MCF 10A (cell line): ENCODE measurements at regions of chr3 and their contacts with region 1.

Region 1: GRCh38 chr3:52123106-52123725 is 31.0 kb downstream of the POC1A start:
- DNase-seq: peak; percentile 75
- H3K4me3 Mint-ChIP-seq: no peak overlapping the region
- H3K27ac Mint-ChIP-seq: peak overlapping the region; percentile 49
- H3K4me1 Mint-ChIP-seq: peaks cover 18% of the 10 kb centered on the region
- H3K27me3 Mint-ChIP-seq: no peaks in the 10 kb centered on the region
- CTCF ChIP-seq: peak; percentile 94

Region 2: GRCh38 chr3:52108302-52109232 is 14.6 kb before region 1 on chr3:
- CTCF ChIA-PET with region 1: interaction called, 14 read pairs
- POLR2A ChIA-PET with region 1: interaction called, 3 read pairs
- intact Hi-C with region 1: no loop called
- DNase-seq: no peak
- H3K4me3 Mint-ChIP-seq: no peak overlapping the region
- H3K27ac Mint-ChIP-seq: peak overlapping the region; percentile 39
- H3K4me1 Mint-ChIP-seq: peaks cover 7% of the 10 kb centered on the region
- H3K27me3 Mint-ChIP-seq: no peaks in the 10 kb centered on the region
- CTCF ChIP-seq: no peak

Region 3: GRCh38 chr3:52144034-52144795 is 21.0 kb after region 1 on chr3:
- CTCF ChIA-PET with region 1: interaction called, 15 read pairs
- POLR2A ChIA-PET with region 1: no interaction called
- intact Hi-C with region 1: loop called (anchors 1 kb)
- DNase-seq: peak; percentile 79
- H3K4me3 Mint-ChIP-seq: no peak overlapping the region
- H3K27ac Mint-ChIP-seq: peak overlapping the region; percentile 31
- H3K4me1 Mint-ChIP-seq: no peaks in the 10 kb centered on the region
- H3K27me3 Mint-ChIP-seq: no peaks in the 10 kb centered on the region
- CTCF ChIP-seq: peak; percentile 89

Region 4: GRCh38 chr3:52238761-52239701 is 115.8 kb after region 1 on chr3 and contains the start of gene TWF2:
- CTCF ChIA-PET with region 1: no interaction called
- POLR2A ChIA-PET with region 1: no interaction called
- intact Hi-C with region 1: no loop called
- DNase-seq: peak; percentile 70
- H3K4me3 Mint-ChIP-seq: peak within 1 kb of the TSS; percentile 86
- H3K27ac Mint-ChIP-seq: peak within 1 kb of the TSS; percentile 87
- H3K4me1 Mint-ChIP-seq: peaks cover 31% of the 10 kb centered on the region
- H3K27me3 Mint-ChIP-seq: no peaks in the 10 kb centered on the region
- CTCF ChIP-seq: no peak
- total RNA-seq, gene TWF2: 30.5 and 47.0 TPM in 2 replicates